ENCODE measurements at regions of chr1 and their contacts with region 1.

Region 1: DNA sequence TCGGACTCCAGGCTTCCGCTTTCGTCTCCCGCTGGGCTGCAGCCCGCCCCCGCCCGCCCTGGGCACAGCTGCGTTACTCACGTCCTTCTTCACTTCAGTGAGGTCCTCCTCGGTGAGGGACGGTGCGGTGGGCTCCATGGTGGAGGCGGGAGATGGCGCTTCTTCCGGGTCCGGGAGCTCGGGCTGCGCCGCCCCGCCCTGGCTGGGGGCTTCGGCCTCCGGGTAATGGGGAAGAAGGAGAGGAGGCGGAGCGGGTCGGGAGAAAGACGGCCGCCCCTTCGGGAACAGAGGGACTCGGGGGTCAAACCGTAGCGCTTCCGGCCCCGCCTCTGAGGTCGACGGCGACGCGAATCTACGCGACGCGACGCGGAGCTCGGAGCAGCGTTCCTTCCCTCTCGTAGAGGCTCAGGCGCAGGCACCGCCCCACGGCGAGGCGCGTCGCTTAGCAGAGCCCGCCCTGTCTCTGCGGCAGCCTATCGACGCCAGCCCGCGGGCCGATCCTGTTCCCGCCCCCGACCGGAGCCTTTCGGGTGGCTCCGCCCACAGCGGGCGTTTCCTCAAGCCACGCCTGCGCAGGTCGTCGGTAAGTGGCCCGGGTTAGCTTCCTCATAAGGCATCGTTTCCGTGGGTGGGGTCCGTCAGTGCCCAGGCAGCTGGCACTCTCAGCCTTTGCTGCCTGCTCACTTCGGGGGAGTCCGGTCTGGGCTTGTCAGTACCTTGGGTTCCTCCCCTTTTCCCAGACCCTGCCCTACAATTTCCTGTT is at the start of gene BCL10:
- DNase-seq: peak; percentile 96 to 98 (median 97)
- H3K4me3 ChIP-seq: peak within 1 kb of the TSS; percentile 75 to 94
- H3K4me3 Mint-ChIP-seq: peak within 1 kb of the TSS; percentile 88 to 93 (median 92)
- H3K27ac ChIP-seq: peak within 1 kb of the TSS; percentile 94
- H3K27ac Mint-ChIP-seq: peak within 1 kb of the TSS; percentile 94 to 97 (median 96)
- H3K4me1 ChIP-seq: peaks cover 55% of the 10 kb centered on the region
- H3K4me1 Mint-ChIP-seq: peaks cover 42 to 62% (median 53%) of the 10 kb centered on the region in 4 donors
- H3K27me3 ChIP-seq: no peaks in the 10 kb centered on the region
- H3K27me3 Mint-ChIP-seq: no peaks in the 10 kb centered on the region
- total RNA-seq, gene BCL10: 36.1 to 37.0 TPM

Region 2: GRCh38 chr1:84433258-84434080 is 842.9 kb before region 1 on chr1:
- CTCF ChIA-PET with region 1: interaction called, 3 read pairs
- POLR2A ChIA-PET with region 1: no interaction called
- intact Hi-C with region 1: loop called (anchors 10 kb)
- DNase-seq: peak; percentile 67 to 83 (median 81)
- H3K4me3 ChIP-seq: peak overlapping the region in 1 of 2 donors; percentile 20
- H3K4me3 Mint-ChIP-seq: peak overlapping the region; percentile 65 to 82 (median 76)
- H3K27ac ChIP-seq: peak overlapping the region; percentile 54
- H3K27ac Mint-ChIP-seq: peak overlapping the region in 1 of 7 donors; percentile 88
- H3K4me1 ChIP-seq: peaks cover 36% of the 10 kb centered on the region
- H3K4me1 Mint-ChIP-seq: peaks cover 8 to 15% (median 12%) of the 10 kb centered on the region in 4 donors
- H3K27me3 ChIP-seq: no peaks in the 10 kb centered on the region
- H3K27me3 Mint-ChIP-seq: no peaks in the 10 kb centered on the region

Region 3: DNA sequence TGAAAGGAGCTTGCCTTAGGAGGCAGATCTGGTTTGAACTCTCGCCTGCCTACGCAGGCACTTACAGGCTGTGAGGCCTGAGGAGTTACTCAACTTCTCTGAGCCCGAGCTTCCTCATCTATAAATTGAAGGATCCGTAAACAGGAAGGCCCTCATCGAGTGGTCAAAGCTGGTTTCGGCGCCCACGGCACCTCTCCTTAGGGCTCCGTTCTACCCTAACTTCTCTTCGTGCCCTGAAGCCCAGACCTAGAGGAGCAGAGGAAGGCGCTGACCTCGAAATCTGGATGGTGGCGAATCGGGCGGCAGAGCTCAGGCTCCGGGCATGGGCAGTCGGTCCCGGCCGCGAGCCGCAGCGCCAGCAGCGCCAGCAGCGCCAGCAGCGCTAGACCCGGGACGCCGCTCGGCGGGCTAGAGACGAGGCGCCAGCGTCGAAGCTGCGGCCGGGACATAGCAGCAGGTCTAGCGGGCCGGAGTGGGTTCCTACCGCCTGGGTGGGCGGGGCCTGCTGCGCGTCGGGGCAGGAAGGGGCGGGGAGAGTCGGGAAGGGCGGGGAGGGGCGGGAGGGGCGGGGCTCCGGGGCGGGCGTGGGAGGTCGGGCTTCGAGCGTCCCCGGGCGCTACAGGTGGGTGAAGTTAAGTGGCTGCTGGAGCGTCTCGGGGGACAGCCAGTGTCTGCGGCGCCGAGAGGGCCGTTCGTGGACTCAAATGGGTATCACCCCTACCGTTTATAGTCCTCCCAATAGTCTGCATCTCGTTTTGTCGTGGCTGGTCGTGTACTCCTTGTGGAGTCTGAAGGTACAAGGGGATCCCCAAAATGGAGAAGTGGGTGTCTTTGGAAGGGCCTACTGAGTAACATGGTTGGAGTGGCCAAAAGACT is 702.2 kb before region 1 on chr1 and contains the start of gene CTBS:
- CTCF ChIA-PET with region 1: no interaction called
- POLR2A ChIA-PET with region 1: interaction called, 12 read pairs
- intact Hi-C with region 1: loop called (anchors 5 kb)
- DNase-seq: peak; percentile 80 to 84 (median 83)
- H3K4me3 ChIP-seq: peak within 1 kb of the TSS; percentile 78 to 97
- H3K4me3 Mint-ChIP-seq: peak within 1 kb of the TSS; percentile 96 to 99 (median 98)
- H3K27ac ChIP-seq: peak within 1 kb of the TSS; percentile 98
- H3K27ac Mint-ChIP-seq: peak within 1 kb of the TSS; percentile 99 to 100 (median 100)
- H3K4me1 ChIP-seq: peaks cover 37% of the 10 kb centered on the region
- H3K4me1 Mint-ChIP-seq: peaks cover 29 to 46% (median 39%) of the 10 kb centered on the region in 4 donors
- H3K27me3 ChIP-seq: no peaks in the 10 kb centered on the region
- H3K27me3 Mint-ChIP-seq: no peaks in the 10 kb centered on the region
- total RNA-seq, gene CTBS: 17.4 to 18.2 TPM

Region 4: GRCh38 chr1:84853741-84854721 is 422.4 kb before region 1 on chr1:
- CTCF ChIA-PET with region 1: no interaction called
- POLR2A ChIA-PET with region 1: no interaction called
- intact Hi-C with region 1: loop called (anchors 2 kb)
- DNase-seq: peak; percentile 58 to 77 (median 64)
- H3K4me3 ChIP-seq: no peak overlapping the region
- H3K4me3 Mint-ChIP-seq: peak overlapping the region in 5 of 8 donors; percentile 7 to 75 (median 27)
- H3K27ac ChIP-seq: peak overlapping the region; percentile 48
- H3K27ac Mint-ChIP-seq: peak overlapping the region; percentile 86 to 96 (median 93)
- H3K4me1 ChIP-seq: peaks cover 20% of the 10 kb centered on the region
- H3K4me1 Mint-ChIP-seq: peaks cover 26 to 37% (median 31%) of the 10 kb centered on the region in 4 donors
- H3K27me3 ChIP-seq: no peaks in the 10 kb centered on the region
- H3K27me3 Mint-ChIP-seq: peaks cover 0 to 1% of the 10 kb centered on the region in 2 donors

Region 5: DNA sequence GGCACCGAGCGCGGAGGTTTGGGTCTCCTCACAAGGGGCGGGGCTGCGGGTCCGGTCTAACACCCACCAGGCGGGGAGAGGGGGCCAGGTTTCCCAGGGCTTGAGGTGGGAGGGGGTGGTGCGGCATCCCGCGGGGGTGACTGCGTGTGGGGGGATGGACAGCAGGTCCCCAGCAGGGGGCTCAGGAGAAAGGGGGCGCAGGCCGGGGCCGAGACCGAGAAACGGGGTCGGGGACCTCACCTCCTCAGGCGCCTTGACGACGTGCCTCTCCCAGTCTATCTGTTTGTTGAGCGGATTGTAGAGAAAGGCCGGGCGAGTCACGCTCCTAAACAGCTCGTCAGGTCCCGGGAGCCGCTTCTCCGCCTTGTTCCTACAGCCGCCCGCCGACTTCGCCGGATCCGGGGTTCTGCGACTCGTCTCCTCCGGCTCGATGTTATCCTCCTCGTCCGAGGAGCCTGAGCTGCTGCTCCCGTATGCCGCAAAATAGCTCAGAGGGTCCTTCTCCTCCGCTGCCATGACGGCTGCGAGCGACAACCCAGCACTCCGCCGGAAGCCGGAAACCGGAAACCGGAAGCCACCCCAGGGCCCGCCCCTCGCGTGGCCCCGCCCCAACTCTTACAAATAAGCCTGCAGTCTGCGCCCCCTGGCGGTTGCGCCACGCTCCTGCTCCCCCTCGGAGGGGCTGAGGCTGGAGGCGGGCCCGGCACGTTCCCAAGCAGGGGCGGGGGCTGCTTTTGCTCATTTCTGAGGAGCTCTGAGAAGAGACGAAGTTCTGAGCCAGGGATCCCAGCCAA is 17.1 kb before region 1 on chr1 and contains the start of gene C1orf52:
- CTCF ChIA-PET with region 1: interaction called, 218 read pairs
- POLR2A ChIA-PET with region 1: interaction called, 53 read pairs
- intact Hi-C with region 1: loop called (anchors 1 kb)
- DNase-seq: peak; percentile 93 to 96 (median 95)
- H3K4me3 ChIP-seq: peak within 1 kb of the TSS; percentile 85 to 95
- H3K4me3 Mint-ChIP-seq: peak within 1 kb of the TSS; percentile 98 to 99 (median 98)
- H3K27ac ChIP-seq: peak within 1 kb of the TSS; percentile 80
- H3K27ac Mint-ChIP-seq: peak within 1 kb of the TSS; percentile 94 to 98 (median 97)
- H3K4me1 ChIP-seq: peaks cover 35% of the 10 kb centered on the region
- H3K4me1 Mint-ChIP-seq: peaks cover 27 to 56% (median 41%) of the 10 kb centered on the region in 4 donors
- H3K27me3 ChIP-seq: no peaks in the 10 kb centered on the region
- H3K27me3 Mint-ChIP-seq: no peaks in the 10 kb centered on the region
- total RNA-seq, gene C1orf52: 39.6 to 41.6 TPM

Region 6: DNA sequence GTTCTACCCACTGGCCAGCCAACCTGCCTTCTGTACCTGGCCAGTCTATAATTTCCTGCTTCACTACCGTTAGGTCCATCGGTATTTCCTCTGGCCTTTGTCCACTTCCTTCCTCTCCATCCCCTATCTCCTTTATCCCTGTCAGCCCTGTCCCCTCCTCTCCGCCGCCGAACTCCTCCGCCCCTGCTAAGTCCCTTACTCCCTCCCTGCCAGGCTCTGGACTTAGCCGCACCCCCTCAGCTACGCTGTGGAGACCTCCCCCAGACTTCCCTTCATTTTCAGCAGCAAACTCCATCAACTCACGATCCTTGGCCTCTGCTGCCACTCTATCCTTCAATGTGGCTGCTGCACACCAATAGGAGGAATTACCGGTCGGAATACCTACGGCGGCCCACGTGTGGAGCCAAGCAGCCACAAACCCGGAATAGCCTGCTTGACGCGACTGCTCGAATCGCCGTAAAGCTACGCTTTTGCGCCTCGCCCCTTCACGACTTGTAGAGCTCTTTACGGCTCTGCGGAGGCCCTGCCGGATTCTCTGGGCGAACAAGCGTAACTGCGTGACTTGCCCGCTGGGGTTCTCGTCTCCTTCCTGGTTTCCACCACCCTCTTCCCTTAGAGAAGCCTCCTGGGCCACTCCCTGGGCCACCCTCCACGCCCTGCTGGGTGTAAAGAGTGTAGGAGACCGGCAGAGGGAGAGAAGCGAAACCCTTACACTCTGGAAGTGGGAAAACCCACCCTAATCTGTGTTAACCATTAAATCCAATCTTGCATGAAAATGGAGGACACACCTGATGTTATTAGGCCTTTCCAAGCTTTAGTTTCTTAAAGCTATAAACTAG is 431.8 kb after region 1 on chr1 and contains the start of gene ZNHIT6:
- CTCF ChIA-PET with region 1: interaction called, 4 read pairs
- POLR2A ChIA-PET with region 1: interaction called, 4 read pairs
- intact Hi-C with region 1: loop called (anchors 1 kb)
- DNase-seq: peak; percentile 87 to 95 (median 91)
- H3K4me3 ChIP-seq: peak within 1 kb of the TSS; percentile 70 to 93
- H3K4me3 Mint-ChIP-seq: no peak within 1 kb of the TSS
- H3K27ac ChIP-seq: peak within 1 kb of the TSS; percentile 73
- H3K27ac Mint-ChIP-seq: no peak within 1 kb of the TSS
- H3K4me1 ChIP-seq: peaks cover 43% of the 10 kb centered on the region
- H3K4me1 Mint-ChIP-seq: peaks cover 19 to 29% (median 25%) of the 10 kb centered on the region in 4 donors
- H3K27me3 ChIP-seq: no peaks in the 10 kb centered on the region
- H3K27me3 Mint-ChIP-seq: no peaks in the 10 kb centered on the region
- total RNA-seq, gene ZNHIT6: 18.0 to 19.2 TPM